ENCODE measurements at regions of chr7 and their contacts with region 1.

Region 1: GRCh38 chr7:115672024-115672423 is 358.5 kb downstream of the TFEC start:
- DNase-seq: no peak
- H3K4me3 ChIP-seq: no peak overlapping the region
- H3K4me3 Mint-ChIP-seq: no peak overlapping the region
- H3K27ac Mint-ChIP-seq: no peak overlapping the region
- H3K4me1 ChIP-seq: peaks cover 16% of the 10 kb centered on the region; the same call in 1 of the 2 replicates
- H3K4me1 Mint-ChIP-seq: peaks cover 7% of the 10 kb centered on the region
- H3K27me3 ChIP-seq: no peaks in the 10 kb centered on the region
- H3K27me3 Mint-ChIP-seq: no peaks in the 10 kb centered on the region
- CTCF ChIP-seq: no peak

Region 2: GRCh38 chr7:115271332-115272235 is 400.4 kb before region 1 on chr7:
- CTCF ChIA-PET with region 1: no interaction called
- POLR2A ChIA-PET with region 1: no interaction called
- intact Hi-C with region 1: no loop called
- DNase-seq: no peak
- H3K4me3 ChIP-seq: no peak overlapping the region
- H3K4me3 Mint-ChIP-seq: no peak overlapping the region
- H3K27ac Mint-ChIP-seq: no peak overlapping the region
- H3K4me1 ChIP-seq: no peaks in the 10 kb centered on the region
- H3K4me1 Mint-ChIP-seq: no peaks in the 10 kb centered on the region
- H3K27me3 ChIP-seq: no peaks in the 10 kb centered on the region
- H3K27me3 Mint-ChIP-seq: no peaks in the 10 kb centered on the region
- CTCF ChIP-seq: no peak

Region 3: DNA sequence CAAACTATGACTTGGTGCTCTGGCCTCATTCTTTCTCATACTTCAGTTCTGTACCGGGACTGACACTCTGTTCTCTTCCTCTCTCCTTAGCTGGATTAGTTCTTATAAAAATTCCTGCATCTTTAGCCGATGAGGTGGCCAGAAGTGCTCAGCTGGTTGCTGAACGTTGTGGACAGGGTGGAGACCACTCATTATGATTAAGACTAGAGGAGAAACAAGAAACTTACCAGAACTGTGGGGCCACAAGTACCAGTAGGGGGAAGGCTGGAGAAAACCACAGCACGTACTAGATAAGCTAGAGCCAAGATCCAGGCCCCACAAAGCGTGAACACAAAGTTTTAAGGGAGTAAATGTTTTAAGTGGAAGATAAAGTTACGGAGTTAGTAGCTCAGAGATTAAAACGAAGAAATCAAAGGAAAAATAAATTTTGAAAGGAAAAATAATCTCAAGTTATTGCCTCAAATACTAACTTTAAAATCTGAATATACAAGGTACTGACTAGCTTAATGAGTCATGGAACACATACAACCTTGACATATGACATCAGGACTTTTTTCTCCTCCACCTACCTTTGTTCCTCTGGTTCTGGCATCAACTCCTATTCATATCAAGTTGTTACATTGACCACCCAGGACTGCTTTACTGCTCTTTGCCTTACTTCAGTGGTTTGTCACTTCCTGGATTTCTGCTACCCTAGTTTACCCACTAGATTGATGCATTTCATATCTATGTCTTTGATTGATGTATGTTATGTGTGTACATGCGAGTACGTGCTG is 110.5 kb before region 1 on chr7:
- CTCF ChIA-PET with region 1: interaction called, 3 read pairs
- POLR2A ChIA-PET with region 1: no interaction called
- intact Hi-C with region 1: loop called (anchors 1 kb)
- DNase-seq: no peak
- H3K4me3 ChIP-seq: no peak overlapping the region
- H3K4me3 Mint-ChIP-seq: no peak overlapping the region
- H3K27ac Mint-ChIP-seq: no peak overlapping the region
- H3K4me1 ChIP-seq: no peaks in the 10 kb centered on the region
- H3K4me1 Mint-ChIP-seq: no peaks in the 10 kb centered on the region
- H3K27me3 ChIP-seq: no peaks in the 10 kb centered on the region; the same call in 1 of the 2 replicates
- H3K27me3 Mint-ChIP-seq: peaks cover 6% of the 10 kb centered on the region
- CTCF ChIP-seq: no peak

Region 4: GRCh38 chr7:115693779-115694178 is 21.8 kb after region 1 on chr7:
- CTCF ChIA-PET with region 1: no interaction called
- POLR2A ChIA-PET with region 1: no interaction called
- intact Hi-C with region 1: no loop called
- DNase-seq: no peak
- H3K4me3 ChIP-seq: no peak overlapping the region
- H3K4me3 Mint-ChIP-seq: no peak overlapping the region
- H3K27ac Mint-ChIP-seq: no peak overlapping the region
- H3K4me1 ChIP-seq: no peaks in the 10 kb centered on the region
- H3K4me1 Mint-ChIP-seq: no peaks in the 10 kb centered on the region
- H3K27me3 ChIP-seq: no peaks in the 10 kb centered on the region
- H3K27me3 Mint-ChIP-seq: peaks cover 6% of the 10 kb centered on the region
- CTCF ChIP-seq: no peak

Region 5: DNA sequence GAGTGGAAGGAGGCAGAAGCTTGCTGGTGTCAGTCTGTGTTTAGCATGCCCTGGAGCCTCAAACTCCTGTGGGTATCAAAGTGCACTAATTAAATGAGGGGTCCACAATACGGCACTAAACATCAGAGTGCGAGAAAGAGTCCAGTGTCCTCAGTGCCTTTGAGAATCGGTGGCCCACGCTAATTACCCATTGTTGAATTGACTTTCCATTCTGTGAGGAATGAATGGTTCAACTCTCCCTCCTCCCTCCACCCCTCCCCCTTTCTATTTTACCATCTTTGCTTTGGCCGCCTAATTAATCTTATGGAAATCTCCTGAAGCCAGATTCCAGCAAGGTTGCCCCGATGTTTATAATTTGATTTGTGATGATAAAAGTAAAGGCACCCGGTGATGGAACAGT is 140.8 kb after region 1 on chr7:
- CTCF ChIA-PET with region 1: no interaction called
- POLR2A ChIA-PET with region 1: no interaction called
- intact Hi-C with region 1: no loop called
- DNase-seq: no peak
- H3K4me3 ChIP-seq: no peak overlapping the region
- H3K4me3 Mint-ChIP-seq: no peak overlapping the region
- H3K27ac Mint-ChIP-seq: no peak overlapping the region
- H3K4me1 ChIP-seq: no peaks in the 10 kb centered on the region
- H3K4me1 Mint-ChIP-seq: no peaks in the 10 kb centered on the region
- H3K27me3 ChIP-seq: no peaks in the 10 kb centered on the region; the same call in 1 of the 2 replicates
- H3K27me3 Mint-ChIP-seq: peaks cover 4% of the 10 kb centered on the region
- CTCF ChIP-seq: no peak